Sigmoid colon (tissue), 7 donors: ENCODE measurements at regions of chr19 and their contacts with region 1.

Region 1: DNA sequence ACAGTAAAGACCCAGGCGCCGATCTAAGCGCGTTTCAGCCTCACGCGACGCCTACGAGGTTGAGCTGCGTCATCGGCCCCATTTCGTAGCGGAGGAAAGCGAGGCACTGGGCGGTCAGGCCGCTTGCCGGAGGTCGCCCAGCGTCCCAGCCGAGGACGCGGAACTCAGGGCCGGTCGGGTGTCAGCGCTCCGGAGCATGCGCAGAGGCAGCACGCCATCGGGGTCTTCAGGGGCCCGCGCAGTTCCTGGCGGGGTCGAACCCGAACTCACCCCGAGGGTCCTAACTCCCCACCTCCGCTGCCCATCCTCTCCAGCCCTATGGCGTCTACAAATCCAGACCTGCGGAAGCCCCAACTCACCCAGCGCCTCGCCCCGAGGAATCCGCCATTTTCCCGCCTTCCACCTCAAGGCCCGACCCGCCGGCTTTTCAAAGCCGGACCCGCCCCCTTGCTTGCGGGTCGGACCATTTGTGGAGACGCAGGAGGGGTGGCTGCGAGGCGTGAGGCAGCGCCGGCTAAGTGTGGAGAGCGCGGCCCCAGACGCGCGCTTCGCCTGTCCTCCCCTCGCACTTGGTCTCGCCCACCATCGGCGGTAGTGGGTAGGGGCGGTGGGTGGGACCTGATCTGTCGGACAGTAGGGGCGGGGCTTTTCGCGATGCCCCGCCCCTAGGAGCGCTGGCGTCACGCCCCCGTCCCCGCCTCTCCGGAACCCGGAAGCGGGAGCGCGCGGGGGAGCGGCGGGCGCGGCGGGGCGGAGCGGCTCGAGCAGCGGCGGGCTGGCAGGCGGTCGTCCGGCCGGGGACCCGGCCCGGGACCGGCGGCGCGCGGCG is at the starts of genes HAUS8 and MYO9B:
- DNase-seq: peak; percentile 100
- H3K4me3 ChIP-seq: peak within 1 kb of the TSS; percentile 76 to 91 (median 84)
- H3K27ac ChIP-seq: peak within 1 kb of the TSS; percentile 87 to 96 (median 93)
- H3K4me1 ChIP-seq: peaks cover 0 to 53% (median 43%) of the 10 kb centered on the region in 4 donors
- H3K27me3 ChIP-seq: no peaks in the 10 kb centered on the region
- CTCF ChIP-seq: no peak
- EP300 ChIP-seq: no peak
- POLR2A ChIP-seq: peak in 1 of 2 donors; percentile 20
- total RNA-seq, gene HAUS8: 6.7 to 14.1 (median 11.1) TPM
- total RNA-seq, gene MYO9B: 42.8 to 95.0 (median 58.3) TPM

Region 2: DNA sequence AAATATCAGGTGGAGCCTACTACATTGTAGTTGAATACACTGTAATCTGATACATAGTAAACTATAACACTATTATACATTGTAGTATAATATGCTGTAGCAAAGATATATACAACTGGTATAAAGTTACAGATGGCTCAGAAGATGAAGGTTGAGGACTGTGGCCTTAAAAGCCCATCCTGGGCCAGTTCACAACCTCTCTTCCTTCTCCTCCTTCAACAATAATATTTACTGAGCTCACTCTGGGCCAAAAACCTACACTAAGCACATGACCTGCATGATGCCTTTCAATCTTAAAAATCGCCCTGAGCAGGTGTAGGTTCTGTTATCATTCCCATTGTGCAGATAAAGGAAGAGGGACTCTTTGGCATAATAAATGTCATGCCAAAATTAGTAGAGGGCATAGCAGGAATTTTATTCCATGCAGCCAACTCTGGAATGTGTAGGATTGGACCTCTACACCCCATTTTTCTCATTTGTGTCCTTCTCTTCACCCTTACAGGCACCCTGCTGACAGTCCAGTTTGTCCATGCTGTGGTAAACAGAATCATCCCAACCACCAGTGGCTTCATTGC is 260.6 kb before region 1 on chr19:
- intact Hi-C with region 1: no loop called
- DNase-seq: no peak
- H3K4me3 ChIP-seq: no peak overlapping the region
- H3K27ac ChIP-seq: no peak overlapping the region
- H3K4me1 ChIP-seq: no peaks in the 10 kb centered on the region
- H3K27me3 ChIP-seq: no peaks in the 10 kb centered on the region
- CTCF ChIP-seq: no peak
- EP300 ChIP-seq: no peak
- POLR2A ChIP-seq: no peak

Region 3: GRCh38 chr19:17052439-17053210 is 22.6 kb before region 1 on chr19:
- intact Hi-C with region 1: no loop called
- DNase-seq: no peak
- H3K4me3 ChIP-seq: no peak overlapping the region
- H3K27ac ChIP-seq: no peak overlapping the region
- H3K4me1 ChIP-seq: no peaks in the 10 kb centered on the region
- H3K27me3 ChIP-seq: no peaks in the 10 kb centered on the region
- CTCF ChIP-seq: peak in 3 of 4 experiments; percentile 29 to 59 (median 49)
- EP300 ChIP-seq: no peak
- POLR2A ChIP-seq: no peak

Region 4: DNA sequence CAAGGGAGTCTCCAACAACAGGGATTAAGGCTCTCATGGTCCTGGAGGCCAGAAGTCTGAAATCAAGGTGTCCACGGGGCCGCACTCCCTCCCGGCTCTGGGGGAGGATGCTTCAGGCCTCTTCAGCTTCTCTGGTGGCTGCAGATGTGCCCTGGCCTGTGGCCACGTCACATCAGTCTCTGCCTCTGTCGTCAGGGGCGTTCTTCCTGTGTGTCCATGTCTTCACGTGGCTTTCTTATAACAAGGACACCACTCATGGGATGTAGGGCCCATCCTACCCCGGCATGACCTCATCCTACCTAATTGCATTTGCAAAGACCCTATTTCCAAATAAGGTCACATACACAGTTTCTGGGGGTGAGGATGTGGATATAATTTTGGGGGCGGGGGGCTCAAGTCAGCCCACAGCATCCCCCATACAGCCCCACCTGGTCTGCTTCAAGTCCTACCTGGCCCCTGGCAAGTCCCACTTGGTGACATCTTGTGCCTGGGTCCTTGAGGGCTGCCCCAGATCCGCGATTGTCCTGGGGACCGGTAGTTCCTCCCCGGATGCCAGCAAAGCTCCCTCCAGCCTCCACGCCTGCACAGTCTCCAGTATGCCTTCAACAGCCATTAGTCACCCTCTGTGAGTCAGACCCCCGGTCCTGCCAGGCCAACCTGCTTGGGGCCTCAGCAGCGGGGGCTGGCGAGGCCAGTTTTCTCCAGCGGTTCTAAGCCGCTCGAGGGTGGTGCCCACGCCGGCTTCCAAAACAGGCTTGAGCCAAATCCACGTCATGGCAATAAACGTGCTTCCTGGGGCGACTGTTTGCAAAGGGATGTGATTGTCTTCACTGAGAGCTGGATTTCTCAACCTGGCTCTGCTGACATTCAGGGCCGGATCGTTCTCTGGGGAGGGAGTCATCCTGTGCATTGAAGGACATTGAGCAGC is 32.5 kb after region 1 on chr19:
- intact Hi-C with region 1: loop called (anchors 2 kb)
- DNase-seq: peak; percentile 97
- H3K4me3 ChIP-seq: peak overlapping the region in 3 of 4 donors; percentile 10 to 26 (median 23)
- H3K27ac ChIP-seq: peak overlapping the region; percentile 82 to 94 (median 88)
- H3K4me1 ChIP-seq: peaks cover 0 to 55% (median 24%) of the 10 kb centered on the region in 4 donors
- H3K27me3 ChIP-seq: no peaks in the 10 kb centered on the region
- CTCF ChIP-seq: no peak
- EP300 ChIP-seq: peak in 2 of 4 donors; percentile 44 to 50
- POLR2A ChIP-seq: no peak

Region 5: GRCh38 chr19:17135001-17135853 is 60.0 kb after region 1 on chr19:
- intact Hi-C with region 1: loop called (anchors 2 kb)
- DNase-seq: peak; percentile 96
- H3K4me3 ChIP-seq: peak overlapping the region in 3 of 4 donors; percentile 27 to 35 (median 30)
- H3K27ac ChIP-seq: peak overlapping the region; percentile 86 to 97 (median 89)
- H3K4me1 ChIP-seq: peaks cover 0 to 30% (median 26%) of the 10 kb centered on the region in 4 donors
- H3K27me3 ChIP-seq: no peaks in the 10 kb centered on the region
- CTCF ChIP-seq: peak in 2 of 4 experiments; percentile 28 to 36
- EP300 ChIP-seq: peak in 1 of 4 donors; percentile 30
- POLR2A ChIP-seq: no peak

Region 6: DNA sequence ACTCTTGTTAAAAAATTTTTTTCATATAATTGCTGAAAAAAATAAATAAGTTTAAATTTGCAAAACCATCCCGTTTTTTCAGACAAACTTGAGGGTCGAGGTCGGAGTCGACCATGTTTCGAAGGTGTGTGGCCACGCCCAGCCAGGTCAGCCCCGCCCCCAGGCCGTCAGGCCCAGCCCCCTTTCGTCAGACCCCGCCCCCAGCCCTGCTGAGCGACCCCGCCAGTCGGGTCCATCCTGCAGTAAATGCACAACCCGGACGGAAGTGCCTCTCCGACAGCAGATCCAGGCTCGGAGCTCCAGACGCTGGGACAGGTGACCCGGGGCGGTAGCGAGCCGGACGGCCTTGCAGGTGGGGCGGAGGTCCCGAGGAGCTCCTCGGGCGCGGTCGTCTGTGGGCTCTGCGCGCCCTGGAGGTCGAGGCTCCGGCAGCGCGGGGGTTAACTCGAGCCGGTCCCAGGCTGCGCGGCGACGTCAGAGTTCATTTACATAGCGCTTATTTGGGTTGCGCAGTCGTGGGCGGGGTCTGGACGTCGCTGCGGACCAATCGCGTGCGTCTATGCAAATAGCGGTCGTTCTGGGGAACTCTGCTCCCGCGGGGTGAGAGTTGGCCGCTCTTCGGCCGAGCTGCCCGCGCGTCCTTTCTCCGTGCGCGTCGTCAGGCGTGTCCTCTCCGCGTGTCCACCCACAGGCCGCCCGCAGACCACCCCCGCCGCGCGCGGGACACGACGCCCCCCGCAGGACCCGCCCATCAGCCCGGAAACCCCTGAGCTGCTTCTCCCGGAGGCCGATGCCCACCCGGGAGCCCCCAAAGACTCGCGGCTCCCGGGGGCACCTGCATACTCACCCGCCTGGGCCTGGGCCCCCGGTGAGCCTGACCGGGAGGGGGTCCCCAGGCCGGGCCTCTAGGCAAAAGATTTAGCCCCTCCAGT is 151.0 kb after region 1 on chr19 and contains the start of gene OCEL1:
- intact Hi-C with region 1: loop called (anchors 1 kb)
- DNase-seq: peak; percentile 100
- H3K4me3 ChIP-seq: peak within 1 kb of the TSS; percentile 62 to 74 (median 64)
- H3K27ac ChIP-seq: peak within 1 kb of the TSS; percentile 85 to 94 (median 87)
- H3K4me1 ChIP-seq: peaks cover 0 to 22% (median 16%) of the 10 kb centered on the region in 4 donors
- H3K27me3 ChIP-seq: no peaks in the 10 kb centered on the region
- CTCF ChIP-seq: no peak
- EP300 ChIP-seq: peak in 2 of 4 donors; percentile 12 to 15
- POLR2A ChIP-seq: peak; percentile 54 to 55
- total RNA-seq, gene OCEL1: 7.5 to 15.8 (median 9.6) TPM